CD8-positive, alpha-beta T cell (primary cell): ENCODE measurements at regions of chr15 and their contacts with region 1.

Region 1: GRCh38 chr15:36896949-36897348 is 203.4 kb downstream of the MEIS2 start:
- DNase-seq: no peak
- ATAC-seq: no peak
- H3K4me3 ChIP-seq: no peak overlapping the region
- H3K4me3 Mint-ChIP-seq: no peak overlapping the region
- H3K27ac ChIP-seq: no peak overlapping the region
- H3K27ac Mint-ChIP-seq: no peak overlapping the region
- H3K4me1 ChIP-seq: no peaks in the 10 kb centered on the region
- H3K4me1 Mint-ChIP-seq: no peaks in the 10 kb centered on the region
- H3K27me3 ChIP-seq: no peaks in the 10 kb centered on the region
- H3K27me3 Mint-ChIP-seq: peaks cover 10% of the 10 kb centered on the region
- CTCF ChIP-seq: no peak

Region 2: DNA sequence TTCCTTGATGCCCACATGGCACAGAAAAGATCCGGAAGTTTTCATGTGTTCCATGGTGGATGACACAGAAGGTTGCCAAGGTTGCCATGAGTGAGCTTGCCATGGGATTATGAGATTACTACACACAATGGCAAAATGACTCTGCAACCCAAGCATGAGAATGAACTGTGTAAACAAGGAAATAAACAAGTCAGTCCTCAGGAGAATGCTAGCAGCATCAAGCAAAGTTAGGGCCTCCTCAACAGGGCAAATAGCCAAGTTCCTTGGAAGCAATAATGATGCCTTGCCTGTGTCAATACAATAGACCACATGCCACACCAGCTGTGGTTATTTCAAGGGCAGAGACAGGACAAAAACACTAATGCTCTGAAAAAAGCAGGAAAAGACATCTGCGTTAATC is 1969.2 kb before region 1 on chr15:
- CTCF ChIA-PET with region 1: no interaction called
- POLR2A ChIA-PET with region 1: no interaction called
- intact Hi-C with region 1: no loop called
- DNase-seq: no peak
- ATAC-seq: no peak
- H3K4me3 ChIP-seq: no peak overlapping the region
- H3K4me3 Mint-ChIP-seq: no peak overlapping the region
- H3K27ac ChIP-seq: no peak overlapping the region
- H3K27ac Mint-ChIP-seq: no peak overlapping the region
- H3K4me1 ChIP-seq: no peaks in the 10 kb centered on the region
- H3K4me1 Mint-ChIP-seq: no peaks in the 10 kb centered on the region
- H3K27me3 ChIP-seq: no peaks in the 10 kb centered on the region
- H3K27me3 Mint-ChIP-seq: no peaks in the 10 kb centered on the region
- CTCF ChIP-seq: no peak

Region 3: GRCh38 chr15:36291501-36291900 is 605.4 kb before region 1 on chr15:
- CTCF ChIA-PET with region 1: no interaction called
- POLR2A ChIA-PET with region 1: no interaction called
- intact Hi-C with region 1: no loop called
- DNase-seq: no peak
- ATAC-seq: no peak
- H3K4me3 ChIP-seq: no peak overlapping the region
- H3K4me3 Mint-ChIP-seq: no peak overlapping the region
- H3K27ac ChIP-seq: no peak overlapping the region
- H3K27ac Mint-ChIP-seq: no peak overlapping the region
- H3K4me1 ChIP-seq: no peaks in the 10 kb centered on the region
- H3K4me1 Mint-ChIP-seq: no peaks in the 10 kb centered on the region
- H3K27me3 ChIP-seq: no peaks in the 10 kb centered on the region
- H3K27me3 Mint-ChIP-seq: peaks cover 4% of the 10 kb centered on the region
- CTCF ChIP-seq: no peak

Region 4: GRCh38 chr15:36356978-36357601 is 539.9 kb before region 1 on chr15:
- CTCF ChIA-PET with region 1: no interaction called
- POLR2A ChIA-PET with region 1: no interaction called
- intact Hi-C with region 1: loop called in 1 of 2 experiments (anchors 10 kb)
- DNase-seq: no peak
- ATAC-seq: no peak
- H3K4me3 ChIP-seq: no peak overlapping the region
- H3K4me3 Mint-ChIP-seq: no peak overlapping the region
- H3K27ac ChIP-seq: no peak overlapping the region
- H3K27ac Mint-ChIP-seq: no peak overlapping the region
- H3K4me1 ChIP-seq: no peaks in the 10 kb centered on the region
- H3K4me1 Mint-ChIP-seq: no peaks in the 10 kb centered on the region
- H3K27me3 ChIP-seq: no peaks in the 10 kb centered on the region
- H3K27me3 Mint-ChIP-seq: no peaks in the 10 kb centered on the region
- CTCF ChIP-seq: no peak

Region 5: DNA sequence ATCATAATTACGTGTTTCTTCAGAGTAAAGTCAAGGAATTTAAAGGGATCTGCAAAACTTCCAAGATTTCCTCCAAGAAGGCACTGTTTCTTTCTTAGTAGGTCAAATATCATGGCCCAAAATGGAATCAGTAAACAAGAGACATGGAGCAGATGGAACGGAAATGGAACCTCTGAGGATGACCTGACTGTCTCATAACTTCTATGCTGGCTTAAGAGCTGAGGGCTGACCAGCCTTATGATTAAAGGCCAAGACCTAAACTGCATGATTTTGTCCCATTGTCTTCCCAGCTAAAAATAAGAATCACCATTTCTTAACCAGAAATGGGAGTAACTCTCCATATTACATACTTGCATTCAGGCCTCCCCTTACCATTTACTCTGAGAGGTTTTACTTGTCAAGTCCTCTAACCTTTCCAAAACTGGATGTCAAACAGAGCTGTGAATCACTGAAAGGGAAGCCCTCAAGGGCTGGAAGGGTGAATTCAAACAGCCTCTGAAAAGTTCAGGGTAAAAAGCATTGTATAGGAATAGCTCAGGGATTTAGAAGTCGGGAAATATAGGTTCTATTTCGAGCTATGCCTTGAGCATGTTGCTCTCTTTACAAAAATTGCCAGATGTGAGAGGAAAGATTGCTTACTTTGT is 99.7 kb after region 1 on chr15:
- CTCF ChIA-PET with region 1: no interaction called
- POLR2A ChIA-PET with region 1: no interaction called
- intact Hi-C with region 1: no loop called
- DNase-seq: no peak
- ATAC-seq: no peak
- H3K4me3 ChIP-seq: no peak overlapping the region
- H3K4me3 Mint-ChIP-seq: no peak overlapping the region
- H3K27ac ChIP-seq: no peak overlapping the region
- H3K27ac Mint-ChIP-seq: no peak overlapping the region
- H3K4me1 ChIP-seq: no peaks in the 10 kb centered on the region
- H3K4me1 Mint-ChIP-seq: no peaks in the 10 kb centered on the region
- H3K27me3 ChIP-seq: no peaks in the 10 kb centered on the region
- H3K27me3 Mint-ChIP-seq: no peaks in the 10 kb centered on the region
- CTCF ChIP-seq: no peak